Activated CD8-positive, alpha-beta T cell treated with anti-CD3 and anti-CD28 coated beads, Interleukin-2, amount 10 ng/mL, durations not matched to agents 7 days and 5 days (primary cell): ENCODE measurements at regions of chr11 and their contacts with region 1.

Region 1: GRCh38 chr11:134275534-134276395 is at the start of gene GLB1L3:
- DNase-seq: peak; percentile 90
- ATAC-seq: peak; percentile 94
- H3K4me3 Mint-ChIP-seq: peak within 1 kb of the TSS; percentile 96
- H3K27ac Mint-ChIP-seq: peak within 1 kb of the TSS; percentile 96
- H3K4me1 Mint-ChIP-seq: peaks cover 51% of the 10 kb centered on the region
- H3K27me3 Mint-ChIP-seq: peaks cover 8% of the 10 kb centered on the region
- total RNA-seq, gene GLB1L3: 3.8 to 4.0 TPM

Region 2: DNA sequence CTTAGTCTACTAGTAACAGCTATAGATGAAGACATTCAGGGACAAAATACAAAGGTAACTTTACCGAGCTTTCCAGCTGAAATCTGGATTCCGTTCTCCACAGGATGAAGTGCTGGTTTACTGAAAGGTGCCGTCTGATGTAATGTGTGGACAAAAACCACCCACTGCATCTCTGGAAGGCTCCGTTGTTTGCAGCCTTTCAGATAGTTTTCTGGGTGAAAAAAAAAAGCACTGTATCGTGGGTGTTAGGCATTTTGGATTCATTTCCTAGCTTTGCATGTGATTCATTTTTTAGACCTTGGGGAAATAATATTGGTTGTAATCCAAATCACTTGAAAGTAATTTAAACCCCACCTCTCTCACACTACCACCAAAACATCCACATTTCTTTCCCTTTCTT is 196.4 kb before region 1 on chr11:
- CTCF ChIA-PET with region 1: no interaction called
- POLR2A ChIA-PET with region 1: no interaction called
- DNase-seq: no peak
- ATAC-seq: no peak
- H3K4me3 Mint-ChIP-seq: no peak overlapping the region
- H3K27ac Mint-ChIP-seq: no peak overlapping the region
- H3K4me1 Mint-ChIP-seq: no peaks in the 10 kb centered on the region
- H3K27me3 Mint-ChIP-seq: peaks cover 6% of the 10 kb centered on the region

Region 3: DNA sequence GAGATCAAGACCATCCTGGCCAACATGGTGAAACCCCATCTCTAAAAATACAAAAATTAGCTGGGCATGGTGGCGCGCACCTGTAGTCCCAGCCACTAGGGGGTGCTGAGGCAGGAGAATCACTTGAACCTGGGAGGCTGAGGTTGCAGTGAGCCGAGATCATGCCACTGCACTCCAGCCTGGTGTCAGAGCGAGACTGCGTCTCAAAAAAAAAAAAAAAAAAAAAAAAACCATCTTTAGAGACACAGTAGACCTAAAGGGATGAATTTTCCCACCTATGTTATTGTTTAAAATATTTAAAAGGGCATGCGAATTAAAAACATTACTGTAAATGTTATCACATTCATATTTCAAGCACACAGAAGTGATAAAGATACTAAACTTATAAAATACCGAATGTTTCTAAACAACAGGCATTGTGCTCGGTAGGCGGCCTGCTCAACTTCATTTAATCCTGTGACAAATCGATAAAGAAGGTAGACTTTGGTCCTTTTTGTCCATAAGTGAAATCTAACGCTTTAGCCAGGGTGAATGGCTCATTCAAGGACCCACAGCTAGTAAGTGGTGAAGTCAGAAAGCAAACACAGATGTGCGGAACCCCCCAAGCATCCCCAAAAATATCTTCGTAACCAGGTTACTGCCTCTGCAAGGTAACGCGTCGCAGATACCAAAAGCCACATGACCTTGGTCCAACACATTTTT is 68.1 kb before region 1 on chr11:
- CTCF ChIA-PET with region 1: interaction called, 13 read pairs
- POLR2A ChIA-PET with region 1: no interaction called
- DNase-seq: peak; percentile 78
- ATAC-seq: peak; percentile 44
- H3K4me3 Mint-ChIP-seq: no peak overlapping the region
- H3K27ac Mint-ChIP-seq: no peak overlapping the region
- H3K4me1 Mint-ChIP-seq: peaks cover 14% of the 10 kb centered on the region
- H3K27me3 Mint-ChIP-seq: no peaks in the 10 kb centered on the region

Region 4: DNA sequence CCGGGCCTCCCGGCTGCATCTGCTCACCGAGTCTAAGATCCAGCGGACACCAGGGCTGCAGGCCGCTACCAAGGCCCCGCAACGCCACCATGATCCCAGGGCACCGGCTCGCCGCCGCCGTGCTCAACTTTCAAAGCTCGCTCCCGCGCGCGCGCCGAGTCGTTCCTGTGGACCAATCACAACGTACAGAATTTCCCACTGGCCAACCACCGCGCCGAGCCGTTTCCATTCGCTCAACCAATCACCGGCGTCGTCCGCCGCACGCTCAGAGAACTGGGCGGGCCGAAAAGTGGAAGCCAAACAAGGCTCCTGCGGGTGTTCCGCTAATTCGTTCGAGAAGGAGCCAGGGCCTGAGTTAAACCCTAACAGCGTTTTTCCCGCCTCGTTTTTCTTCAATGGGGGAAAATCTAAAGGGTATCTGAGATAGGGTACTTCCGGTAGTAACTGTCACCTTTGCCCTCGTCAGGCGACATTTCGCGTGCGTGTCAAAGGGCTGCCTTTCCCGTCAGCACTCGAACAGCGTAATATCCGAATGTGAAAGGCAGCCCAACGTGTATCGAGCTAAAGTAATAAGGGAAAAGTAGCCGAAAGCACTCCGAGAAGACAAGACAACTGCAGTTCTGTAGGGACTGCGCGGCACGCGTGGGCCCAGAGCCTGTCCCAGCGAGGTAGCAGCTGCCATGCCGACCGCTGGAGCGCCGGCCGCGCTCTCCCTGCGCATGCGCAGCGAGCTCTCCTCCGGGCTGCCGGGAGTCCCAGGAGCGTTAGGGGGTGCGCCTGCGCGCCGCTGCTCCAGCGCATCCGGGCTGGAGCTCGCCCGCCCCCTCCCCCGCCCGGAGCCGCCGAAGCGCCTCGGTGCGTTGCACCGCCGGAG is 51.7 kb before region 1 on chr11 and contains the starts of genes NCAPD3 and VPS26B:
- CTCF ChIA-PET with region 1: interaction called, 15 read pairs
- POLR2A ChIA-PET with region 1: interaction called, 32 read pairs
- DNase-seq: peak; percentile 98
- ATAC-seq: peak; percentile 84
- H3K4me3 Mint-ChIP-seq: peak within 1 kb of the TSS; percentile 97
- H3K27ac Mint-ChIP-seq: peak within 1 kb of the TSS; percentile 97
- H3K4me1 Mint-ChIP-seq: peaks cover 70% of the 10 kb centered on the region
- H3K27me3 Mint-ChIP-seq: no peaks in the 10 kb centered on the region
- total RNA-seq, gene NCAPD3: 125 to 136 TPM
- total RNA-seq, gene VPS26B: 55.1 TPM

Region 5: GRCh38 chr11:134253188-134253993 is 22.4 kb before region 1 on chr11 and contains the starts of genes ACAD8 and THYN1:
- CTCF ChIA-PET with region 1: interaction called, 9 read pairs
- POLR2A ChIA-PET with region 1: interaction called, 14 read pairs
- DNase-seq: peak; percentile 98
- ATAC-seq: peak; percentile 100
- H3K4me3 Mint-ChIP-seq: peak within 1 kb of the TSS; percentile 86
- H3K27ac Mint-ChIP-seq: peak within 1 kb of the TSS; percentile 89
- H3K4me1 Mint-ChIP-seq: peaks cover 32% of the 10 kb centered on the region
- H3K27me3 Mint-ChIP-seq: no peaks in the 10 kb centered on the region
- total RNA-seq, gene ACAD8: 20.7 to 21.1 TPM
- total RNA-seq, gene THYN1: 53.7 to 56.1 TPM

Region 6: DNA sequence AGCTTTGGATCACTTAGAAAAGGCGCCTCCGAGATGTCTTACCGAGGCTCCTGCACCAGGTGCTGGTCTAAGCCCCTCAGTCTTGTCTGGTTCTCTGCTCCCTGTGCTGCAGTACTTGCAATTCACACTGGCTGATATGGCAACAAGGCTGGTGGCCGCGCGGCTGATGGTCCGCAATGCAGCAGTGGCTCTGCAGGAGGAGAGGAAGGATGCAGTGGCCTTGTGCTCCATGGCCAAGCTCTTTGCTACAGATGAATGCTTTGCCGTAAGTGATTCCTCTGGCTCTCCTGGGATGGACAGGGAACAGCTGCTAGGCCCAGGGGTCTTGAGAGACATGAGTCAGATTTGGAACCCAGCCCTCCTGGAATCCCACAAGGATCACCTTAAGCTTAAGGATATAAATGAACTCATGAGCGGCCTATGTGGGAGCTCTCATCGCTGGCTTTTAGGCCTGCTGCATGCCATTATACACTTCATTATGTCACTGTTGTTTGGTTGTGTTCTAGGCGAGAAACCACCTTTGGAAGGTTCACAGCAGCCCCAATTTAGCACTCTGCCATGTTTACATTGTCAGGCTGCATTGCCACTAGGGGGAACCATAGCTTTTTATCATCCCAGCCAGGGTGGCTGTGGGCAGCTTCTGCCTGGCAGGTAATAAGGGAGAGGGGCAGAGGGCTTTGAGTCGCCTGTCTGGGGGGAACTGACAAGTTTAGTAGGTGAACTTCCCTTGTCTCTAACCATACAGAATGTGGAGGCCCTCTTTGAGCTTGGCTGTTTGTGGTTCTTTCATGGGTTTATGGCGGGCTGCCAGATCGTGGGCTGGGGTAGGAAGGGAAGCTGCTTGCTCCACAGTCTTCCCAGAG is 13.9 kb before region 1 on chr11:
- CTCF ChIA-PET with region 1: interaction called, 94 read pairs
- POLR2A ChIA-PET with region 1: interaction called, 4 read pairs
- DNase-seq: peak; percentile 60
- ATAC-seq: peak; percentile 79
- H3K4me3 Mint-ChIP-seq: no peak overlapping the region
- H3K27ac Mint-ChIP-seq: no peak overlapping the region
- H3K4me1 Mint-ChIP-seq: peaks cover 12% of the 10 kb centered on the region
- H3K27me3 Mint-ChIP-seq: no peaks in the 10 kb centered on the region